GM10248 (cell line): ENCODE measurements at regions of chr3 and their contacts with region 1.

Region 1: DNA sequence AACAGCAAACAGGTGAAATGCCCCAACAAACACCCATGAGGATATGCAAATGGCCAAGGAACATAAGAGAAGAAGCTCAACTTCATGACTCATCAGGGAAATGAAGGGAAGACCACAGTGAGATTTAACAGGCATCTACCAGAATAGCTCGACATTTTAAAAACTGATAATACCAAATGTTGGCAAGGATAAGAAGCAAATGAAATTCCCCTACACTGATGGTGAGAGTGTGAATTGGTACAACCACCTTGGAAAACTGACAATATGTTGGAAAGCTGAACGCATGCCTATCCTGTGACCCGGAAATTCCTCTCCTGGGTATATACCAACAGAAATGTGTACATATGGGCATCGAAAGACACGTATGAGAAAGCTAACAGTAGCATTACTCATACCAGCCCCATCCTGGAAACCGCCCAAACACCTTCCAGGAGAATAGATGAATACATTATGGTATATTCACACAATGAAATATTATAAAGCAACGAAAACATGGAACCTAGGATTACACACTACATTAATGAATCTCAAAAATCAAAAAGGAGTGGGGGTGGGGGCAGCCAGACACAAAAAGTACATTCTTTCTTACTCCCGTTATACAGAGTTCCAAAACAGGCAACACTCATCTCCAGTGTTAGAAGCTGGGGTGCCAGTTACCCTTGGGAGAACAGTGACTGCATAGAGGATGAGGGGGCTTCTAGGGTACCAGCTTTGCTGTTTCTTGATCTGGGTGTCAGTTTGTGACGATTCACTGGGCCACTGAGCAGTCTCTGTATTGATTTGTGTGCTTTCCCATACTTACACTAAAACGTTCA is 16.9 kb downstream of the RFTN1 start:
- DNase-seq: peak; percentile 34
- CTCF ChIP-seq: no peak

Region 2: GRCh38 chr3:16357186-16358147 is 139.1 kb before region 1 on chr3:
- CTCF ChIA-PET with region 1: no interaction called
- POLR2A ChIA-PET with region 1: no interaction called
- DNase-seq: no peak
- CTCF ChIP-seq: no peak

Region 3: DNA sequence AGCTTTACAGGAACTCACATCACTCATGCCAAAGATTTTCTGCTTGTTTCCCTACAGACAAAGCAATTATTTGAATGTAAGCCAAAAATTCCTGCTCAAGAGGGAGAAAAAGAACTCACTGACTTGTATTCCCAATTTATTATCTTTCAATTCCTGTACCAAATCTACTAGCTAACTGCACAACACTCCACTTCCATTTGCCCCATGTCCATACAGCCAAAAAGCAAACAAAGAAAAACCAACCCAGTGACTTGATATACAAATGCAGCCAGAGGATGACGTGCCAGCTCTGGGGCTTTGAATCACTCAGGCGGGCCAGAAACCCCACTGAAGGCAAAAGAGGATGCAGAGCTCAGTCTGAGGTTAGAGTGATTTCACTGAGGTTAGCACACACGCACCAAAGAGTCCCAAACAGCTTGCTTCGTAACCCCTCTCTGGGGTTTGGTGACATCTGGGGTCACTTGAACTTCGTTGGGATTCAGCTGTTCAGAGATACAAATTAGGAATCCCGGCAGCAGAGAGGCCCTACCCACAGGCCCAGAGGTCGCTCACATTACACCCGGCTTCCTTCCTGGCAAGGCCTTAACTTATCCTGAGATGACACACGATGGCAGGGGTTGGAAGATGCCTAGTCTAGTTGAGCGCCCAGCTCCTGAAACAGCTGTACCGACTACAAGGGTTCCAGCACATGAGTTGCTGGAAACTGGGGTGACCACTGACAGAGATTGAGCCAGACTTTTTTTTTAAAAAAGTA is 15.2 kb after region 1 on chr3:
- CTCF ChIA-PET with region 1: interaction called, 49 read pairs
- POLR2A ChIA-PET with region 1: interaction called, 7 read pairs
- DNase-seq: peak; percentile 71
- CTCF ChIP-seq: no peak